Right cardiac atrium (tissue), 5 donors: ENCODE measurements at regions of chr10 and their contacts with region 1.

Region 1: DNA sequence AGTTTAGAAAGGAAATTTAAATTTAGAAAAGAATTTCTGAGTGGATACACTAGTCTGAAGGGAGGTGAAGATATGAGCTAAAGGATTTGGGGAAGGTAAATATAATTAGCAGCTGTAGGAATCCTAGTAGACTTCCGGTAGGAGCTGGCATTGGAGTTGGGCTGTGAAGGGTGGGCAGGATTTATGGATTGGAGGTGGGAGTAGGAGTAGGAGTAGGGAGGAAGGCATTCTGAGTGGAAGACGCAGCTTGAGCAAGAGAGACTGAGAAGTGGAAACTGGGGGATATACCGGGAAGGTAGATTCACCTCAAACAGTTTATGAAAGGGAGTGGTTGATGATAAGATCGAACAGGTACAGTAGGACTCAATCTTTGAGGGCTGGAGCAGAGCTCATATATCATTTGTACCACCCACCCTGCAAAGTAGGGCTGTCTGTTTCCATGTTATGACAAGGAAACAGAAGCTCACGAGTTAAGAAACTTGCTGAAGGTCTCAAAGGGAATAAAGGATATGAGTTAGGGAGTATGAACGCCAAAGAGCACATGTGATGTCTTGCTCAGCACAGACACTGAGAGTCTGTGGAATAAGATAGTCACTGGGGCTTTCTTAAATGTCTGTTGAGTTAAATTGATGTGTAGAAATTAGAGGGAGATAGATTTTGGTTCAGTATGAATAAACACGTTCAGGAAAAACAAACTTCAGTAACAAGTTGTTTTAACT is 81.6 kb downstream of the RPS24 start:
- DNase-seq: no peak
- ATAC-seq: no peak
- H3K4me3 ChIP-seq: no peak overlapping the region
- H3K27ac ChIP-seq: no peak overlapping the region
- H3K4me1 ChIP-seq: no peaks in the 10 kb centered on the region
- H3K27me3 ChIP-seq: no peaks in the 10 kb centered on the region

Region 2: DNA sequence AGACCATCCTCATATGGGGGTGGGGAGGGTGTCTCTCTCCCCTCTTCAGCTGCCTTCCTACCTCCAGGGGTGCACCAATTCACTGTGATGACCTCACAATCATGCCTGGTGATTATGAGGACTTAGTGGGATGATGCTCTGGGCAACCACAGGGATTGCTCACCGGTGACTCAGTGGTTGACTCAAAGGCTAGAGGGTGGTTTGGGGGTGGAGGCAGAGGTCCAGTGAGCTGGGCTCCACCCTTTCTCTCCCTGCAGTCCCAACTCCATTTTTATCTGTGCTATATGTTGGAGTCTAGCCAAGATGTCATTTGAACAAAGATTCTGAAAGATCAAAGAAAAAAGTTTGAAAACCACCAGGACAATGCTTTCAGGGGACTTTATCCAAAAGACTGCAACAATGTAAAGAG is 764.6 kb before region 1 on chr10:
- intact Hi-C with region 1: loop called in 1 of 4 experiments (anchors 10 kb)
- DNase-seq: peak in 1 of 3 donors; percentile 68
- ATAC-seq: peak; percentile 72 to 90
- H3K4me3 ChIP-seq: no peak overlapping the region
- H3K27ac ChIP-seq: no peak overlapping the region
- H3K4me1 ChIP-seq: no peaks in the 10 kb centered on the region
- H3K27me3 ChIP-seq: no peaks in the 10 kb centered on the region

Region 3: DNA sequence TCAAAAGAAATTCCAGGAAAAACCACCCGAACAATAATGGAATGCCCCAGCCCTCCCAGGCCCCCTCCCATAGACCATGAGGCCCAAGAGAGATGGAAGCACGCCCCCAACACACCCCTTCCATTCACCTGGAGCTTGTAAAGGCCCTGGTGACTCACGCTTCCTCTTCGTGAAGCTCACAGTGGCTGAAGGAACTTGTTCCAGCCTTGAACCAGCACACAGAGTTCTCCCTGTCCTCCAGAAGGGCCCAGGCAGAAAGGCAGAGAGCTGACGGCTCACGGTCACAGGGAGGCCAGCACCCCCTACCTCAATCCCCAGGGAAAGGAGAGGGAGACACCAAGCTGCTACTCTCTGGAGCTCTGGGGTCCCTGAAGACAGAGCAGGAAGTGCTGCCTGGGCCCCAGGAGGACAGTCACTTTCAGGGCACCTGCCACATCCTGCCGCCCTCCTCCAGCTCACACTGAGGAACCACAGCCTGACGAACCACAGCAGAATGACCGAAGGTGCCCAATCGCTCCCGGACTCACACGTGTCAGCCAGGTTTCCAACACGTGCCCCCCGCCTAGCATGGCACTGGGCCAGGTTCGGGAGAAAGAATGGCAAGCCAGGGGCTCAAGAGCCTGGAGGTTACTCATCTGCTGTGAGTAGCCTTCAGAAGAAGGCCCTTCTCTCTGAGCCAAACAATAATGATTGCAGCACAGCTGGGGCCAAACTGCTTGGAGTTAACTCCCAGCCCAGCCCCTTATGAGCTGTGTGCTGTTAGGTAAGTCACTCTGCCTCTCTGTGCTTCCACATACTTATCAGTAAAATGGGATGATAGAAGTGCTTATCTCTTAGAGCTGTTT is 241.5 kb before region 1 on chr10:
- intact Hi-C with region 1: no loop called
- DNase-seq: peak; percentile 43 to 76 (median 62)
- ATAC-seq: peak; percentile 13 to 24
- H3K4me3 ChIP-seq: no peak overlapping the region
- H3K27ac ChIP-seq: peak overlapping the region; percentile 25
- H3K4me1 ChIP-seq: peaks cover 27% of the 10 kb centered on the region
- H3K27me3 ChIP-seq: no peaks in the 10 kb centered on the region